Dorsolateral prefrontal cortex (tissue), 120 donors: ENCODE measurements at regions of chr3 and their contacts with region 1.

Region 1: DNA sequence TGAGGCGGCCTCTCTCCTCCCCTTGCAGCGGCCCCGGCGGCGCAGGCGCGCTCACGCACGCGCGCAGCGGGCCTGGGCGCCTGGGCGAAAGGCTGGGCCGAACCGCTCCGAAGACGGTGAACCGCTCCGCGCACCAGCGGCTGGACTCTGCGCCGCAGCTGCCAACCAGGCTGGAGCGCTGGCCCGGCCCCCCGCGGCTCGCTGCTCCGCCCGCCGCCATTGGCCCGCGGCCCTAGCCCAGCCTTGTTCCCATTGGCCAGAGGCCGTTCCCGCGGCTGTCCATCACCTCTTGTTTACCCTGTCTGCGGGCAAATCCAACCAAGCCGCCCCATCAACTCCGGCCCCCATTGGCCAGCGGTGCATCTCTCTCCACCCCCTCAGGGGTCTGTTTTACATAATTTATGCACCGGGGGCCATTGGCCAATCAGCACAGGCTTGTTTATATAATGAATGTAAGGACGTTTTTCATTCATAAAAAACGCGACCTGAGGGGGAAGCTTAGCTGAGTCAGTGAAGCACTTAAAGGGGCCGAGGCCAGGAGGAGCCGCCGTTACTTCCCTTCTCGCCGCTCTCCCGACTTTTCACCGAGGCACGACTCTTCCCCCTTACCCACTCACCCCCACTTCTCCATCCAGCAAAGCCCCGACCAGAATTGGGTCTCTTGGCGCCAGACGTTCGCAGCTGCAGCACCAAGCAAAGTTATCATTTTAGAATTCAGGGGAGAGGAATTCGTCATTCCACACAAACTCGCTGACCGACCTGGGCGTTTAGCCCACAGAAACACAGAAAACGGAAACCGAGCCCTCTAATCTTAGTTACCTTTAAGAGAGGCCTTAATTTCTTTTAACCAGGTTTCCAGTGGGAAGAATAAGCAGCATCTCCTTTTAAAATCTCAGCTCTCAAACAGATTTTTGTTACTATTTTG is at the start of gene ETV5:
- DNase-seq: peak; percentile 99 to 100 (median 100)
- H3K4me3 ChIP-seq: peak within 1 kb of the TSS; percentile 66 to 96 (median 83)
- H3K27ac ChIP-seq: peak within 1 kb of the TSS in 57 of 59 donors; percentile 11 to 93 (median 81)
- H3K27me3 ChIP-seq: peaks cover 0 to 2% (median 0%) of the 10 kb centered on the region in 45 donors
- CTCF ChIP-seq: peak in 17 of 56 donors; percentile 1 to 41 (median 17)
- total RNA-seq, gene ETV5: 21.0 to 97.9 (median 44.5) TPM

Region 2: DNA sequence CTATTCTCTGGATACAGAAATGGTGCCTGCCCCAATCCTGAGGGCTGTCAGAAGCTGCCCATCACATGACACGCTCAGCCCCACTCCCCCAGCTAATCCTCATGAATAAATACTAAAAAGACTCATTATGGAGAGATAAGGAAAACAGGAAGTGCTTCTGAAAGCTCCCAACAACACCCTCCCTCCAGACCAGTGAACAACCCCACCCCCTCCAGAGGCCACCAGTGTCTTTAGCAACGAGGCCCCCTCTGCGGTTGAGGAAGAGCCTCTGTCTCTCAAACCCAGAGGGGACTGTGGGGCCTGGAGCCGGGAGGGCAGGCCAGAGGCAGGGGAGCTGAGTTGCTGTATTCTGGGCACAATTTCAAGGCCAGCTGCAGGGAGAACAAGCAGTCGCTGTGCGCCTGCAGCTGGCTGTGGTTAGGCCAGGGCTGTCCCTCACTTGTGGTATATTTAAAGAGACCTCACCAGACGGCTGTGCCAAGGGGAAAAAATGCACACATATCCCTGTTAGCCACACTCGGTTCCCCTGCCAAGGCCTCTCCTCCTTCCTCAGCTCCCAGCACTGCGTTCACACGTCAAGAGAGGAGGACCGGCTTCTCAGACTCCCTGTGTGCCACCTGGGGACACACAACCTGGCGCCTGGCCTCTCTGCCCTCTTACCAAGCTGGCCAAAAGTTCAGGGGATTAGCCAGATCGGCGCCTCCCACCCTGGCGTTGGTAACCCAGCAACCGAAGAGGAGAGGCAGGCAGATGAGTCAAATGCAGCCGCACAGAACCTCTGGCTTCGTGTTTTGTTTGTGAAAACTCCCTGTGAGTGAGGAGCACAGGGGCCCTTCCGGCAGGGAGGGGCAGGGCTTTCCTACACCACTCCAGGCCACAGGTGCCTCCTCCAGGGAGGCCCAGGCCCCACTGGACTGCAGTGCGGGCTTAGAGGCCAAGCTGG is 100.9 kb after region 1 on chr3:
- intact Hi-C with region 1: loop called (anchors 2 to 5 kb)
- DNase-seq: peak; percentile 40 to 93 (median 89)
- H3K4me3 ChIP-seq: peak overlapping the region in 29 of 59 donors; percentile 0 to 39 (median 26)
- H3K27ac ChIP-seq: peak overlapping the region; percentile 68 to 96 (median 92)
- H3K27me3 ChIP-seq: no peaks in the 10 kb centered on the region
- CTCF ChIP-seq: peak in 16 of 56 donors; percentile 6 to 59 (median 18)

Region 3: GRCh38 chr3:186217820-186218164 is 108.6 kb after region 1 on chr3:
- intact Hi-C with region 1: loop called in 1 of 2 experiments (anchors 5 kb)
- DNase-seq: no peak
- H3K4me3 ChIP-seq: no peak overlapping the region
- H3K27ac ChIP-seq: peak overlapping the region in 33 of 59 donors; percentile 1 to 70 (median 41)
- H3K27me3 ChIP-seq: no peaks in the 10 kb centered on the region
- CTCF ChIP-seq: no peak

Region 4: DNA sequence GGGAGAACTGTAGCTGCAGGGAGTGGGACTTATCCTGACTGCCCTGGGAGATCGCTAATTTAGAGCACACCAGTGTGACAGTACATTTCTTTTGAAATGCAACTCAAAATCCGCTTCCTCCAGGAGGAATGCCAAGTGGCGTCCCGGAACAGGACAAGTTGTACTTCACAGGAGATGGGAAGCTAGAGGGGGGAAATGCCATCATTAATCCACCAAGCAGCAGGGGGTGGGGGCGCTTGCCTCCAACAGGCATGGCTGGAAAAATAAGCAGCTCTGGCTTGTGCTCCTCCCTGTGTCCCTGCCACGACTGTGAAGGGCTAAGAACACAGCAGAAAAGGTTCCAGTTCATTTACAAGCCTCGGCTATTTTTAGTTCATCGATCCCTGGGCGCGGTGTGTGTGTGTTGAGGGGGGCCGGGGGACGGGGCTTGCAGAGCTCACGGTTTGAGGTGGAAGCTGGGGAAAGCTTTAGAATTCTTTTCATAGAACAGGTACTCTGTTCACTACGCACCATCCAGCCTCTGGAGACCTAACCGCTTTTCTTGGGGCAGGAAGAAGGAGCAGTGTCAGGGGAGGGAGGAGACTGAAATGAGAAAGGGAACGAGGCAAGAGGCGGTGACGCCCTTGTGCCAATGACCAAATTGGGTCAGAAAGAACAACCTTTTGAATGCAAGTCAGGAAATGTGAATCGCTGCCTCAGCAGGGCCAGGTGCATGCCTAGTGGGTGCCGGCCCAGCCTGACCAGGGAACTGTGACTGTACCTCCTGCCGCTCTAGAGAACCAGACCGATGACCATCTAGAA is 304.6 kb after region 1 on chr3:
- intact Hi-C with region 1: no loop called
- DNase-seq: peak in 8 of 10 donors; percentile 50 to 83 (median 66)
- H3K4me3 ChIP-seq: peak overlapping the region in 55 of 59 donors; percentile 16 to 66 (median 37)
- H3K27ac ChIP-seq: peak overlapping the region in 51 of 59 donors; percentile 8 to 90 (median 66)
- H3K27me3 ChIP-seq: peaks cover 0 to 2% (median 0%) of the 10 kb centered on the region in 45 donors
- CTCF ChIP-seq: no peak